Activated CD8-positive, alpha-beta T cell treated with anti-CD3 and anti-CD28 coated beads, Interleukin-2, amount 10 ng/mL, durations not matched to agents 7 days and 5 days (primary cell): ENCODE measurements at regions of chr6 and their contacts with region 1.

Region 1: DNA sequence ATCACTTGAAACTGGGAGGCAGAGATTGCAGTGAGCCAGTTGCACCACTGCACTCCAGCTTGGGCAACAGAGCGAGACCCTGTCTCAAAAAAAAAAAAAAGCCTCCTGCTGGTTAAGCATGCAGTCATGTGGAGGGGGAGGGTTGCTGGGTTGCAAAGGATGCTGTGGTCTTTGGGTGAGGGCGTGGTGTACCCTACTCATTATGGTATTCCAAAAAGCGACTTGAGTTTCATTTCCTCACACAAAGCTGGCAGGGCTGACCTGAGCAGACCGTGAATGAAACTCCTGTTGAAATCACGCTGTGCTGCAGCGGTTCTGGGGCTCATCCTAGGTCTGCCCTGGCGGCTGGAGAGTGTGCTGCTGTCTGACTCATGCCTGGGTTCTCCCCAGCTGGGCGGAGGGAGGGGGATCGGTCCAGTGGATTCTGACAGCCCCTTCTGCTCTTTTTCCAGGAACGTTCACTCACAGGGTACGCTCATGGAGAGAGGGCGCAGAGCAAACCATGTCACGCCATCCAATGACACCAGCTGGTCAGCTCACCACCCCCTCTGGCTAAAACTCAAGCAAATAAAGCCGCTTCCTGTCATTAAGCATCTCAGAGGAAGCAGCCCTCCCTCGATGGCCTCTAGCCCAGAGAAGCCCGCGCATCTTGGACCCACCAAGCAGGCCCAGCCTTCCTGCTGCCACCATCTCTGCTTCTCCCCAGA is 166.2 kb downstream of the SCML4 start:
- DNase-seq: peak; percentile 87
- ATAC-seq: peak; percentile 91
- H3K4me3 Mint-ChIP-seq: peak overlapping the region; percentile 78
- H3K27ac Mint-ChIP-seq: peak overlapping the region; percentile 98
- H3K4me1 Mint-ChIP-seq: peaks cover 73% of the 10 kb centered on the region
- H3K27me3 Mint-ChIP-seq: no peaks in the 10 kb centered on the region

Region 2: GRCh38 chr6:107459283-107460082 is 198.4 kb before region 1 on chr6 and contains the start of gene PDSS2:
- CTCF ChIA-PET with region 1: interaction called, 11 read pairs
- POLR2A ChIA-PET with region 1: interaction called, 26 read pairs
- DNase-seq: peak; percentile 99
- ATAC-seq: peak; percentile 96
- H3K4me3 Mint-ChIP-seq: peak within 1 kb of the TSS; percentile 95
- H3K27ac Mint-ChIP-seq: peak within 1 kb of the TSS; percentile 95
- H3K4me1 Mint-ChIP-seq: peaks cover 20% of the 10 kb centered on the region
- H3K27me3 Mint-ChIP-seq: peaks cover 2% of the 10 kb centered on the region
- total RNA-seq, gene PDSS2: 14.2 to 14.6 TPM

Region 3: DNA sequence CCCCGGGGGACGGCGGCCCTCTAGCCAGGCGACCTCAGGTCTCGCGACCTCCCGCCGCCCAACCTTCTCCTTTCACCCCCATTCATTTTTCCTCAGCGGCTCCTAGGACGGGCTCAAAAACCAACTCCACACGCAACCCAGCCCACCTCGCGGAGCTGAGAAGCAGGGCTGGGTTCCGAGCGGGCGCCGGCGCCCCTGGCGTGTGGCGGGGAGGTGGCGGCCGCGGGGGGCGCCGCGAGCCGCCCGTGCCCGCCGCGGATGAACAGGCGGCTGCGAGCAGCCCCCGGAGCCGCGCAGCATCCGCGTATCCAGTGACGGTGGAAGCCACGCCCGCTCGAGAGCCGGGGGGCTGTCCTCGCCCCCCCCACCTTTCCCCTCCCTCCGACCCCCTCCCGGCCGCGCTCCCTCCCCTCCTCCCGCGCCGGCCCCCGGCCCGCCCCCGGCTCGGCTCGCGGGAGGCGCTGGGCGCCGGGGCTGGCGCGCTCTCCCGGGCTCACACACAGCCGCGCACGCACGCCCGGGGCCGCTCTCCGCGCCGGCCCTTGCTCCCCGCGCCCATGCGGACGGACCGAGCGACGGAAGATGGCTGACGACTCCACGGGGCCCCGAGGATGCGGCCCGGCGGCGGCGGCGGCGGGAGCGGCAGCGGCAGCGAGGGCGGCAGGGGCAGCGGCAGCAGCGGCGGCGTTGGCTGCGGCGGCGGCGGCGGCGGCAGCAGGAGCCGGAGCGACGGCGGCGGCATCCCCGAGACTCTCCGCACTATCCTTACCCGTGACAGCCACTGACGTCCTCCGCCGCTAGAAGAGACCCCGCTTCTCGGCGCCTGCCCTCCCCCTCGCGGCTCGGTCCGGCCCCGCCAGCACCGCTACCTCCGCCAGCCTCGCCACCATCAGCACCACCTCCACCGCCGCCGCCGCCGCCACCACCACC is 168.0 kb before region 1 on chr6 and contains the start of gene SOBP:
- CTCF ChIA-PET with region 1: interaction called, 19 read pairs
- POLR2A ChIA-PET with region 1: interaction called, 4 read pairs
- DNase-seq: peak; percentile 50
- ATAC-seq: peak; percentile 62
- H3K4me3 Mint-ChIP-seq: peak within 1 kb of the TSS; percentile 81
- H3K27ac Mint-ChIP-seq: peak within 1 kb of the TSS; percentile 64
- H3K4me1 Mint-ChIP-seq: peaks cover 28% of the 10 kb centered on the region
- H3K27me3 Mint-ChIP-seq: peaks cover 55% of the 10 kb centered on the region
- total RNA-seq, gene SOBP: 1.0 to 1.2 TPM

Region 4: DNA sequence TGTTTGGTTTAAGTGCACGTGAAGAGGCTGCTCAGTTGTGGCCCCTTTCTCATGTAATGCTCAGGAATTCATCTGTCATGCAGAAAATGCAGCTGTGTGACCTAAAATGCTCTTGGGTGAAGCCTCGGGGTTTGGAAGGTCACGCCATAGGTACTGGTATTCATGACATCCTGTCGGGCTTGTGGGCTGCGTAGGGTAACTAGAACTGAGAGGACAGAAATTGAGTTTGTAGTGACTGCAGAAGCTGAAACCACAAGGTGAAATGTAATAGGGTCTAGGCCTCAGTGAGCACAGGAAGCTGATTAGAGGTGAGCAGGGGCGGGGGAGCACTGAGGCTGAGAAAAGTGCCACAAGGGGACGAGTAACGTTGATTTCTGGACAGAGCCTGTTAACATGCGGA is 39.2 kb before region 1 on chr6:
- CTCF ChIA-PET with region 1: interaction called, 27 read pairs
- POLR2A ChIA-PET with region 1: interaction called, 20 read pairs
- DNase-seq: peak; percentile 89
- ATAC-seq: peak; percentile 98
- H3K4me3 Mint-ChIP-seq: peak overlapping the region; percentile 24
- H3K27ac Mint-ChIP-seq: peak overlapping the region; percentile 90
- H3K4me1 Mint-ChIP-seq: peaks cover 50% of the 10 kb centered on the region
- H3K27me3 Mint-ChIP-seq: peaks cover 3% of the 10 kb centered on the region

Region 5: GRCh38 chr6:107642095-107642860 is 15.6 kb before region 1 on chr6:
- CTCF ChIA-PET with region 1: interaction called, 10 read pairs
- POLR2A ChIA-PET with region 1: interaction called, 4 read pairs
- DNase-seq: no peak
- ATAC-seq: no peak
- H3K4me3 Mint-ChIP-seq: no peak overlapping the region
- H3K27ac Mint-ChIP-seq: no peak overlapping the region
- H3K4me1 Mint-ChIP-seq: peaks cover 7% of the 10 kb centered on the region
- H3K27me3 Mint-ChIP-seq: peaks cover 24% of the 10 kb centered on the region

Region 6: DNA sequence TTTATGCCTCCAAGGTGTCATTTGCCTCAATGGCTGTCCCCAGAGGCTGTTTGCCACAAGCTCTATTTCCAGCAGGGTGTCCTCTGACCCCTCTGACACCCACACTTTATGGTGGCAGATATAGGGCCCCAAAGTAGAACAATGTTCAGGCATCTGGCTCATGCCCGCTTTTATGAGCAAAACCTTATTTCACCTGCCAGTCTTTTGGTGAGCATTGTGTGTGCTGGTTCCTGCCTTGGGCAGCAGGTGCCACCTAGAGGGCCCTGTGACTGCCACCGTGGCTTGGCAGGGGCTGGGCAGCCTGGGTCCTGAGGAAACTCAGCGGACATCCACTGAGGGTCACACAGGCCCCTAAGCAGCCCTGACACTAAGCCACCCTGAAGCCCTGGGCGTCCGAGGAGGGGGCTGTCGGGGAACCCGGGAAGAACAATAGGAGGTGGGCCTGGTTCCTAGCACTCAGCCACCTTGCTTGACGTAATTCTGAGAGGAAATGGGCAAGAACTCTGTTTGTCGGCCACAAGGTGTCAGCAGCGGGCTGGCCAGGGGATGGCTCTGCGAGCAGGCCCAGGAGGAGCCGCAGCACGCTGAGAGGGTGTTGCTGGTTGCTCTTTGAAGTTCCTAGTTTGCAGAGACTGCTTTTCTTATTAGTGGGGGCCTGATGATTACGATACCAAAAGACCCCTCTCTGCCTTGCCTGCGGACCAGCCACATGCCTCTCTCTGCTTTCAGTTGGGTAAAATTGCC is 17.3 kb after region 1 on chr6:
- CTCF ChIA-PET with region 1: interaction called, 38 read pairs
- POLR2A ChIA-PET with region 1: interaction called, 10 read pairs
- DNase-seq: peak; percentile 93
- ATAC-seq: peak; percentile 99
- H3K4me3 Mint-ChIP-seq: peak overlapping the region; percentile 71
- H3K27ac Mint-ChIP-seq: peak overlapping the region; percentile 95
- H3K4me1 Mint-ChIP-seq: peaks cover 31% of the 10 kb centered on the region
- H3K27me3 Mint-ChIP-seq: peaks cover 2% of the 10 kb centered on the region

Region 7: DNA sequence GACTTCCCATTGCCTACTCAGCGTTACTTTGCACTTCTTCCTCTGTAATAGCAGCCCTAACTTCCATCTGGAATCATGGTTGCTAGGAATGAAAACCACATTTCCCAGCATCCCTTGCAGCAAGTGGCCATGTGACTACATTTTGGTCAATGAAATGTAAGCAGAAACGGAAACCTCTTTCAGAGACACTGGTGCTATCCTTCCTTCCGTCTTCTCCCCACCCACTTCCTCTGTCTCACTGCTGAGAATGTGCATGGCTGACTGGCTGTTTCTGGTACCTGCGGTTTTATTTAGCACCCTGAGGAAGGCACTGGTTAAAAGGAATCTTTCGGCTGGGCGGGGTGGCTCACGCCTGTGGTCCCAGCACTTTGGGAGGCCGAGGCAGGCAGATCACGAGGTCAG is 58.8 kb after region 1 on chr6:
- CTCF ChIA-PET with region 1: no interaction called
- POLR2A ChIA-PET with region 1: no interaction called
- DNase-seq: peak; percentile 91
- ATAC-seq: peak; percentile 85
- H3K4me3 Mint-ChIP-seq: peak overlapping the region; percentile 19
- H3K27ac Mint-ChIP-seq: peak overlapping the region; percentile 87
- H3K4me1 Mint-ChIP-seq: peaks cover 66% of the 10 kb centered on the region
- H3K27me3 Mint-ChIP-seq: no peaks in the 10 kb centered on the region

Region 8: GRCh38 chr6:107811591-107812218 is 153.8 kb after region 1 on chr6:
- CTCF ChIA-PET with region 1: no interaction called
- POLR2A ChIA-PET with region 1: no interaction called
- DNase-seq: peak; percentile 13
- ATAC-seq: no peak
- H3K4me3 Mint-ChIP-seq: no peak overlapping the region
- H3K27ac Mint-ChIP-seq: no peak overlapping the region
- H3K4me1 Mint-ChIP-seq: peaks cover 24% of the 10 kb centered on the region
- H3K27me3 Mint-ChIP-seq: no peaks in the 10 kb centered on the region

Region 9: GRCh38 chr6:107830060-107830459 is 172.2 kb after region 1 on chr6:
- CTCF ChIA-PET with region 1: no interaction called
- POLR2A ChIA-PET with region 1: no interaction called
- DNase-seq: no peak
- ATAC-seq: no peak
- H3K4me3 Mint-ChIP-seq: no peak overlapping the region
- H3K27ac Mint-ChIP-seq: no peak overlapping the region
- H3K4me1 Mint-ChIP-seq: peaks cover 27% of the 10 kb centered on the region
- H3K27me3 Mint-ChIP-seq: no peaks in the 10 kb centered on the region